Activated CD8-positive, alpha-beta T cell treated with anti-CD3 and anti-CD28 coated beads for 36 hours (primary cell): ENCODE measurements at regions of chr7 and their contacts with region 1.

Region 1: GRCh38 chr7:150778738-150779301 is 21.3 kb downstream of the TMEM176B start:
- DNase-seq: peak; percentile 85
- ATAC-seq: peak; percentile 66
- H3K4me3 Mint-ChIP-seq: no peak overlapping the region
- H3K27ac Mint-ChIP-seq: no peak overlapping the region
- H3K4me1 Mint-ChIP-seq: no peaks in the 10 kb centered on the region
- H3K27me3 Mint-ChIP-seq: peaks cover 3% of the 10 kb centered on the region
- CTCF ChIP-seq: peak; percentile 94

Region 2: DNA sequence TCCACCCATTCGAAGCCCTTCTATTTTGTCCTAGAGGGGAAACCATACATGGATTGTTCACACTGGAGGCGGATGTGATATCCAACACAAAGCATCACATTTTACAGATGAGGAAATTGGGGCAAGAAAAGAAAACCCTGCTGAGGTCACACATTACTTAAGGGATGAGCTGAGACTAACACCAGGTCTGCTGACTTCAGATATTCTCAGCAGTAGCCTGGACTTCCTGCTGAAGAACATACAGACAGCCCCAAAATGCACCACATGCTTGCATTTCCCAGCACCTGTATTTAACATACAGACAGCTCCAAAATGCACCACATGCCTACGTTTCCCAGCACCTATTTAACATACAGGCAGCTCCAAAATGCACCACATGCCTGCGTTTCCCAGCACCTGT is 30.4 kb before region 1 on chr7:
- CTCF ChIA-PET with region 1: no interaction called
- POLR2A ChIA-PET with region 1: no interaction called
- intact Hi-C with region 1: no loop called
- DNase-seq: no peak
- ATAC-seq: peak; percentile 43
- H3K4me3 Mint-ChIP-seq: no peak overlapping the region
- H3K27ac Mint-ChIP-seq: peak overlapping the region; percentile 84
- H3K4me1 Mint-ChIP-seq: peaks cover 92% of the 10 kb centered on the region
- H3K27me3 Mint-ChIP-seq: no peaks in the 10 kb centered on the region
- CTCF ChIP-seq: no peak

Region 3: GRCh38 chr7:150766334-150766709 is 12.5 kb before region 1 on chr7:
- CTCF ChIA-PET with region 1: interaction called, 16 read pairs
- POLR2A ChIA-PET with region 1: no interaction called
- intact Hi-C with region 1: no loop called
- DNase-seq: no peak
- ATAC-seq: no peak
- H3K4me3 Mint-ChIP-seq: no peak overlapping the region
- H3K27ac Mint-ChIP-seq: no peak overlapping the region
- H3K4me1 Mint-ChIP-seq: peaks cover 3% of the 10 kb centered on the region
- H3K27me3 Mint-ChIP-seq: no peaks in the 10 kb centered on the region
- CTCF ChIP-seq: no peak

Region 4: GRCh38 chr7:150962553-150963399 is 184.0 kb after region 1 on chr7:
- CTCF ChIA-PET with region 1: no interaction called
- POLR2A ChIA-PET with region 1: no interaction called
- intact Hi-C with region 1: no loop called
- DNase-seq: peak; percentile 69
- ATAC-seq: peak; percentile 98
- H3K4me3 Mint-ChIP-seq: no peak overlapping the region
- H3K27ac Mint-ChIP-seq: no peak overlapping the region
- H3K4me1 Mint-ChIP-seq: peaks cover 2% of the 10 kb centered on the region
- H3K27me3 Mint-ChIP-seq: peaks cover 16% of the 10 kb centered on the region
- CTCF ChIP-seq: peak; percentile 90